ENCODE measurements at regions of chr9 and their contacts with region 1.

Region 1: DNA sequence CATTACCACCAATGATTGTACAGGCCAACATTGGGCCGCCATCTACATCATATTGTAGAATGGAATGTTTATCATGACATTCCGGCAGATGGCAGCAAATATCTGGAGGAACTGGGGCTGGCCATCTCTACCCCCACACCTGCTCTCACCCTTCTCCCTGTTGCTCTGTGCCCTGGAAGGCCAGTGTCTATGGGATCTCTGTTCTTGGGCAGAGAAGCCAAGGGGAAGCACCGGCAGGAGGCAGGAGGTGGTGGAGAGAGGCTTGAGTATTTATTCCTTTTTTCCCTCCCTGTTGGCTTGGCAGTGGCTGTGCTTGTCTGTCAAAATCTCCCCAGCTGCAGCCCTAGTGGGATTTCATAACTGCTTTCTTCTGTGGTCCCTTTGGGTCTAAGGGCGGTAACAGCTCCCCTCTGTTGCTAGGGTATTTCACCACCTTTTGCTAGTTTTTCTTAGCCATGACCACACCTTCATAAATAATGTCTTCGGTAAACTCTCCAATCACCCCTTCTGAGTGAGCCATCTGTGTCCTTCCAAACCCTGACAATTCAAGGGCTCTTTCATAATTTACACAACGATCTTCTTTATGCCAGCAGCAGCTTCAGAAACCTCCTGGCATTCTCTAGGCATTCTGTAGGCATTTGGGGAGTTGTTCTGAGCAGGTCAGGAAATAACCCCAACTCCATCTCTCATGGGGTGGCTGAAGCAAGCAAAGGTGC is 225.8 kb downstream of the MELK start:
- DNase-seq: no peak
- H3K4me3 ChIP-seq: no peak overlapping the region
- H3K27ac ChIP-seq: no peak overlapping the region
- H3K4me1 ChIP-seq: no peaks in the 10 kb centered on the region
- H3K27me3 ChIP-seq: peaks cover 6% of the 10 kb centered on the region
- CTCF ChIP-seq: 0 out of 2 replicates have a peak, but pooled peaks have one; percentile 20

Region 2: DNA sequence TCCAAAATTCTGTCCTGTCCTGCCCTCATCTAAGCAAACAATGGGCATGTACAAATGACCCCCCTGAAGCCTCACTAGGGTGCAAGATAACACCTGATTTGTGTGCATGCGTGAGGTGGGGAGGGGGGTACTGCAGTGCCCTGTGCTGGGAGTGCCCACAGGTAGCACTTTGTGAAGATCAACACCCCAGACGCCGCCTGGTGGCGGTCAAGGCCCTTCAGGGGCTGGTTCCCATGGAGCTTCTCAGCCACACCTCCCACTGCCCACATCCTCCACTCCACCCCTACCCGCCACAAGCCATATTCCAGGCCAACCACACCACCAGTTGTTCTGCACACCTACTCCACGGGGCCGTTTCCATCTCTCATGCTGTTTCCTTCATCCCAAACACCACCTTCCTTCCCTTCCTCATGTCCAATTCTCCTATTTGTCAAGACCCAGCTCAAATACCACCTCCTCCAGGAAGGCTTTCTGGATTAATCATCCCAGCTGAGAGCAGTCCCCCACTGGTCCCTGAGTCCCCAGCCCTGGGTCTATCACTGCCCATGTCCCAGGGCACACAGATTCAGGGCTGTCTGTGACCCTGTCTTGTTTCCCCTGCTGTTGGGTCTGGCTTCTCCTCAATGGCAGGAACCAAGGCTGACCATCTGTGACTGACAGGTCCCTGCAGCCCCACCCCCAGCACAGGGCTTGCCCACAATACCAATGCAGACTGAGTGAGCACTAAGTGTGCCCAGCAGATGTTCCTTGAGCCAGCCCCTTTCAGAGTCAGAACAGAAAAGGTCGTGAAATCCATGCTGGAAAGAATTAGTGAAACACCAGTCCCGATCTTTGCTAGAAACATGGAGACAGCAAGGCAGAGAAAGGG is 57.2 kb after region 1 on chr9:
- CTCF ChIA-PET with region 1: no interaction called
- POLR2A ChIA-PET with region 1: no interaction called
- intact Hi-C with region 1: loop called (anchors 5 kb)
- DNase-seq: no peak
- H3K4me3 ChIP-seq: no peak overlapping the region
- H3K27ac ChIP-seq: no peak overlapping the region
- H3K4me1 ChIP-seq: no peaks in the 10 kb centered on the region
- H3K27me3 ChIP-seq: no peaks in the 10 kb centered on the region
- CTCF ChIP-seq: no peak

Measured in A673 (cell line).